Dendritic cell treated with granulocyte-macrophage colony-stimulating factor and Interleukin-4, amounts not matched to agents 40 ng/mL and 50 ng/mL, for 4 days (primary cell): ENCODE measurements at regions of chr2 and their contacts with region 1.

Region 1: DNA sequence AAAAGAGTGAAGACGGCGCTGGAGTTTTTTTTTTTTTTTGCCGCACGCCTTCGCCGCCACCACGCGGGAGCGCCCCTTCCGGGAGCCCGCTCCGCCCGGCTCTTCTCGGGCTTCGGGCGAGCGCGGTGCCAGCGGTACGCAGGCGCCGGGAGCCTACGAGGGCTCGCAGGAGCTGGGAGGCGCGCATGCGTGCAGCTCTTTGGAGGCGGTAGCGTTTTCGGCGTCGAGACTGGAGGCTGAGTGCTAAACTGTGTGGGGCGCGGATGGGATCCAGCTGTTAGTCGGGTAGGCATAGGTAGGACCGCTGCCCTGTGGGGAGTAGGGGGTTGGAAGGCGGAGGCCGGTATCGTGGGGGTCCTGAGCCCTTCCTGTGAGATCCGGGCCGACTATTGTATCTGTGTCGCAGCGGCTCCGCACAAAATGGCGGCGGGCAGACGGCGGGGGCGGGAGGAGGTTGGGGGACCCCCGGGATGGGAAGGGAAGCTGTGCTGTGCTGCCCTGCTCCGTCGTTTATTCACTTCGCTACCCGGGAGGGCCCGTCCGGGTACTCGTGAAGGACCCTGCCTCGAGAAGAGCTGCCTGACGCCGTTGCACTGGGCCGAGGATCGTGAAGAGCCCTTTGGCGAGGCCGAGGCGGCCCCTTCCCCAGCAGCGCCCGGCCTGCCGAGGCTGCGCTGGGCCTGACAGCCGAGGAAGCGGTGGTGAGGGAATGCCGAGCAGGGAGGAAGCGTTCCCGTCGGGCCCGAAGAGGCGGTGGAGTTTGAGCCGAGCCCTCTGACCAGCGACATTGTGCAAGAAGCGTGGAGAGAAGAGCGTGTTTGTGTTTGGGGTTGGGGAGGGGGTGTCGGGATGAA is at the start of gene ZNF638:
- H3K4me3 Mint-ChIP-seq: peak within 1 kb of the TSS; percentile 97
- H3K27ac Mint-ChIP-seq: peak within 1 kb of the TSS; percentile 97
- H3K4me1 Mint-ChIP-seq: peaks cover 24% of the 10 kb centered on the region
- H3K27me3 Mint-ChIP-seq: no peaks in the 10 kb centered on the region

Region 2: GRCh38 chr2:71130113-71130904 is 201.5 kb before region 1 on chr2 and contains the starts of genes MCEE and MPHOSPH10:
- intact Hi-C with region 1: loop called (anchors 10 kb)
- H3K4me3 Mint-ChIP-seq: no peak within 1 kb of the TSS
- H3K27ac Mint-ChIP-seq: no peak within 1 kb of the TSS
- H3K4me1 Mint-ChIP-seq: no peaks in the 10 kb centered on the region
- H3K27me3 Mint-ChIP-seq: no peaks in the 10 kb centered on the region

Region 3: DNA sequence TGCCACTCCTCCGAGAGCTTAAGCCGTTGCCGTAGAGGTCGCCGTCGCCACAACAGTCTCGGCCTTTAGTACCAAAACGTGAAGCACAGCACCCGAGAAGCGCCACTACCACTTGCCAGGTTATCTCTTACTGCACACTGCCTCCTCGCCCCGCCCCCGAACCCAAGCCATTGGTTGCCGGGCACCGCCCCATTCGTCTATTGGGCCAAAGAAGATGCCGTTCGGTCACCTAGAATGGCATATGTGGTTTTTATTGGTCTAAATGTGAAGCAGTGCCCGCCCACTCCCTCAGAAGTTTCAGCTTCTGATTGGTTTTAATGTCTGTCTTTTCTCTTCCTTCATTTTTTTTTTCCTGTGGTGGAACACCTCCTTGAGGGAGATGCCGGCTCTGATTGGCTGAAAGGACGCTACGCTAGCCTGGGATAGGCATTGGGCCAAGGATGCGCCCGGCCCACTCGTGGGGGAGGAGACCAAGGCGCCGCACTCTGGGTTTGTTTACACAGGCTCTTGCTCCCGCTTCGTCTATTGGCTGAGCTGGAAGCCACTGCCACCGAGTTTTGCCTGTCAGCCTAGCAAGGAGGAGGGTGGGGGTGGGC is 104.7 kb before region 1 on chr2 and contains the start of gene PAIP2B:
- intact Hi-C with region 1: loop called (anchors 5 kb)
- H3K4me3 Mint-ChIP-seq: peak within 1 kb of the TSS; percentile 93
- H3K27ac Mint-ChIP-seq: peak within 1 kb of the TSS; percentile 68
- H3K4me1 Mint-ChIP-seq: peaks cover 15% of the 10 kb centered on the region
- H3K27me3 Mint-ChIP-seq: peaks cover 20% of the 10 kb centered on the region

Region 4: GRCh38 chr2:71276311-71277146 is 55.3 kb before region 1 on chr2:
- intact Hi-C with region 1: loop called (anchors 2 kb)
- H3K4me3 Mint-ChIP-seq: peak overlapping the region; percentile 78
- H3K27ac Mint-ChIP-seq: peak overlapping the region; percentile 30
- H3K4me1 Mint-ChIP-seq: peaks cover 25% of the 10 kb centered on the region
- H3K27me3 Mint-ChIP-seq: peaks cover 54% of the 10 kb centered on the region

Region 5: GRCh38 chr2:71299507-71299906 is 32.3 kb before region 1 on chr2:
- intact Hi-C with region 1: loop called (anchors 5 kb)
- H3K4me3 Mint-ChIP-seq: no peak overlapping the region
- H3K27ac Mint-ChIP-seq: no peak overlapping the region
- H3K4me1 Mint-ChIP-seq: no peaks in the 10 kb centered on the region
- H3K27me3 Mint-ChIP-seq: no peaks in the 10 kb centered on the region